ENCODE measurements at regions of chr1 and their contacts with region 1.

Region 1: DNA sequence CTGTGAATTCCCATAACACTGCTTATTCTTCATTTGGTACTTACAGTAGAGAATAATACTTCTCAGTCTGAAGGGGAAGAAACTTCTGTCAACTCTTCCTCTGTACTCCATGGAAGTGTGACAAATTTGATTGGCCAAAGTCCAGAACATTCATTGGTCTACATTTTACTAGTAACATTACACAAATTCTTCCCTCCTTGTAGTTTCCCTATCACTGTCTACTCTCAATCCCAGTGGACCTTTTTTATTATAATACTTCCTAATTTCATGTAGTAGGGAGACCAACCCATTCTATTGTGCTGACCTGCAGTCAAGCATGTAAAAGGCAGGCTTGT is 74.7 kb downstream of the ALG6 start:
- DNase-seq: no peak
- H3K4me3 ChIP-seq: no peak overlapping the region
- H3K27ac ChIP-seq: no peak overlapping the region
- H3K27me3 ChIP-seq: no peaks in the 10 kb centered on the region
- CTCF ChIP-seq: no peak

Region 2: GRCh38 chr1:63004868-63005267 is 437.2 kb before region 1 on chr1:
- intact Hi-C with region 1: loop called in 1 of 2 experiments (anchors 10 kb)
- DNase-seq: no peak
- H3K4me3 ChIP-seq: no peak overlapping the region
- H3K27ac ChIP-seq: no peak overlapping the region
- H3K27me3 ChIP-seq: peaks cover 0 to 9% (median 0%) of the 10 kb centered on the region in 45 donors
- CTCF ChIP-seq: peak in 54 of 56 donors; percentile 11 to 70 (median 43)

Region 3: DNA sequence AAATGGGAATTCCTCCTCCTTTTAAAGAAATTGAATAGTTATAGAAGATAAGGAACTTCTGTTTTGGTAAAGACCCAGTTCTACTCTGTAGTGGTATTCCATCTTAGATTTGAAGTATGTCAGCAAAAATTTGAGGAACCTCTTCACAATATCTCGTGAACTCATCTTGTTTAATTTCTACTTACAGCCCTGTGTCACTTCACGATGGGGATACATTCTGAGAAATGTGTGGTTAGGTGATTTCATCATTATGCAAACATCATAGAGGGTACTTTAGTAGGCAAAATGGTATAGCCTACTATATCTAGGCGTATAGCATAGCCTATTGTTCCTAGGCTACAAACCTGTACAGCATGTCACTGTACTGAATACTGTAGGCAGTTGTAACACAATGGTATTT is 38.7 kb before region 1 on chr1:
- intact Hi-C with region 1: no loop called
- DNase-seq: no peak
- H3K4me3 ChIP-seq: no peak overlapping the region
- H3K27ac ChIP-seq: no peak overlapping the region
- H3K27me3 ChIP-seq: no peaks in the 10 kb centered on the region
- CTCF ChIP-seq: no peak

Measured in dorsolateral prefrontal cortex (tissue), 120 donors.